GM10248 (cell line): ENCODE measurements at regions of chr19 and their contacts with region 1.

Region 1: DNA sequence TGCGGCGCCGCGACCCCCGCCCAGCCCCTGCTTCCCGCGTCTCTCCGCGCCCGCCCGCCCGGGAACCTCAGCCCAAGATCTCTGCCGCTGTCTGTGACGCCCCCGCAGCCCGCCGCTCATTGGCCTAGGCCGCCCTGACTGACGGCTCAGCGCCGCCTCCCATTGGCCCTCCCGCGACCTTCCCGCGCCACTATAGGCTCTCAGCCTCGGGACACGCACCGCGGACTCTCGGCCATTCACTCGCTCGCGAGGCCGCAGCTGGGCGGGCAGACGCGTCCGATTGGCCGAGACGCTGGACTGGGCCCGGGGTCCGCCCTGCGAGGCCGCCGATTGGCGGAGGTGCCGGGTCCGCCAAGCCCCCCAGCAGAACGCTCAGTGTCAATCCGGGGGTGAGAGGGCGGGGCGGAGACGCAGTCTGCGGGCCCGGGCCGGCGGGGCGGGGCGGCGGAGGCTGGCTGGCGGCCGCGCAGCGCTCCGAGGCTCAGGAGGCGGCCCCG is at the start of gene PRKACA:
- DNase-seq: peak; percentile 99
- CTCF ChIP-seq: no peak

Region 2: DNA sequence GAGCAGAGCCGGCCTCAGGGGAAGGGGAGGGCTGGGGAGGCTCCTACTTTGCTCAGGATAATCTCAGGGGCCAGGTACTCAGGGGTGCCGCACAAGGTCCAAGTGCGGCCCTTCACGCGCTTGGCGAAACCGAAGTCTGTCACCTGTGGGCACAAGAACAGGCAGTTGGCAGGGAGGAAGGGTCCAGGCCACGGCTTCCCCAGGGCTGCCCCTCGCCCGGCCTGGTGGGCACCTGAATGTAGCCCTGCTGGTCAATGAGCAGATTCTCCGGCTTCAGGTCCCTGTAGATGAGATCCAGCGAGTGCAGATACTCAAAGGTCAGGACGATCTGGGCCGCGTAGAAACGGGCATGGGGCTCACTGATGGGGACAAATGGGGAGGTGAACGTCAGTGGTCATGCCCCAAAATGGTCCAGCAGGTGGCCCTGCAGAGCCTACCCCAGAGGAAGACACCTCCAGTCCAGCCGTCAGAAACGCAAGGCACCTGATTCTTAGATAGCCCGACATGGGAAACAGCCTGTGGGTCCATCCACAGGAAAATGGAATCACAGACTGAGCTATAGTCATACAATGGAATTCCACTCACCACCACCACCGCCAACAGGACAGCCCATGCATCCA is 20.1 kb before region 1 on chr19:
- CTCF ChIA-PET with region 1: interaction called, 48 read pairs
- POLR2A ChIA-PET with region 1: no interaction called
- DNase-seq: no peak
- CTCF ChIP-seq: peak; percentile 9

Region 3: GRCh38 chr19:14127929-14128509 is 10.3 kb after region 1 on chr19:
- CTCF ChIA-PET with region 1: interaction called, 18 read pairs
- POLR2A ChIA-PET with region 1: no interaction called
- DNase-seq: peak; percentile 16
- CTCF ChIP-seq: no peak